ENCODE measurements at regions of chr5 and their contacts with region 1.

Region 1: DNA sequence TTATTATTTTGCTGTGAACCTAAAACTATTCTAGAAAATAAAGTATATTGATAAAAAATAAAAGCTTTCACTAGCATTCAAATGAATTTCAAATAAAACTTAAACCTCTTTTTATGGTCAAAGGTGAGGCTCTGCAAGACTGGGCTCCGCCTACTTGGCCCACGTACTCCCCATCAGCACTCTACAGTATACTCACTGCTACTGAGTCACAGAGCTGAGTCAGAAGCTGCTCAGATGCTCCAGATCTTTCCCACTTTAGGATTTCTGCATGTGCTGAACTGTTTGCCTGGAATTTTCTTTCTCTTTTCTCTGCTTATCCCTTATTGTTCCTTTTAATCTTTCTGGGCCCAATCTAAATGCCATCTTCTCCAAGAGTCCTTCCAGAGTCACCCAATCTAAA is 331.9 kb upstream of the CCNG1 start:
- DNase-seq: no peak
- ATAC-seq: no peak
- H3K4me3 ChIP-seq: no peak overlapping the region
- H3K4me3 Mint-ChIP-seq: no peak overlapping the region
- H3K27ac ChIP-seq: no peak overlapping the region
- H3K27ac Mint-ChIP-seq: no peak overlapping the region
- H3K4me1 ChIP-seq: no peaks in the 10 kb centered on the region
- H3K4me1 Mint-ChIP-seq: no peaks in the 10 kb centered on the region
- H3K27me3 ChIP-seq: no peaks in the 10 kb centered on the region
- H3K27me3 Mint-ChIP-seq: no peaks in the 10 kb centered on the region
- CTCF ChIP-seq: no peak

Region 2: GRCh38 chr5:163094492-163095180 is 10.8 kb before region 1 on chr5:
- CTCF ChIA-PET with region 1: no interaction called
- POLR2A ChIA-PET with region 1: no interaction called
- intact Hi-C with region 1: loop called in 1 of 2 experiments (anchors 1 kb)
- DNase-seq: no peak
- ATAC-seq: no peak
- H3K4me3 ChIP-seq: no peak overlapping the region
- H3K4me3 Mint-ChIP-seq: no peak overlapping the region
- H3K27ac ChIP-seq: no peak overlapping the region
- H3K27ac Mint-ChIP-seq: no peak overlapping the region
- H3K4me1 ChIP-seq: no peaks in the 10 kb centered on the region
- H3K4me1 Mint-ChIP-seq: no peaks in the 10 kb centered on the region
- H3K27me3 ChIP-seq: no peaks in the 10 kb centered on the region
- H3K27me3 Mint-ChIP-seq: no peaks in the 10 kb centered on the region
- CTCF ChIP-seq: no peak